ENCODE measurements at regions of chr10 and their contacts with region 1.

Region 1: DNA sequence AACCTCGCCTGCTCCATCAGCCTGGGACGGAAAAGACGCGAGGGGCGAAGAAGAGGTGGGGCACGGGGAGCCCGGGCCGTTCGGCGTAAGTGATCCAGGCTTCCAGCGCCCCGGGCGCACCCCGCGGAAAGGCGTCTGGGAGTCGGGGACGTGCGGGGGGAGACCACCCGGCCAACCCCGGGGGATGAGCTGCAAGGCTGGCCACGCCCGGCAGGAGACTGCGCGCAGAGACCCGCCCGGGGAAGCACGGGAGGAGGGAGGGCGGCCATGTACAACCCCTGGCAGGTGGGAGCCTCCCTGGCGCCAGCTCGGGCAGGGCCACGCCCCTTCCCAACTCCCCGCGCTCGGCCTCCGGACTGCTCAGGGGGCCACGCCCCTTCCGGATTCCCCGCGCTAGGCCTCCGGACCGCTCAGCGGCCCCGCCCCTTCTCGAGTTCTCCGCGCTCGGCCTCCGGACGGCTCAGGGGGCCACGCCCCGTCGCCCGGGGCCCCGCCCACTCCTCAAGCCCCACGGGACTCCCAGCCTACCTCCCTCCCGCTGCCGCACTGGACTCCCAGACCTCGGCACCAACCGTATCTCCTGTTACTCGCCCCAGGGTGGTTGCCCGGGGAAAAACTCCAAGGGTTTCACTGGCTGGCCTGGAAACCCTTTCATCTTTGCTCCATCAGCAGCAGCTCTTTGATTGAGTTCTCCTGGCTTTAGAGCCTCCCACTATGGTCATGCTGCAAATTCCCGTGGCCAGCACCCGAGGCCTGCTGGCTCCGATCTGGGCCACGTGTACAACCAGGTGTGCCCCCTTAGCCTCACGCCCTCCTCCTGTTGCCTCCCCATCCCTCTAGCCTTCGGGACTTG is 284.4 kb downstream of the ZEB1 start:
- DNase-seq: peak; percentile 64
- ATAC-seq: peak; percentile 97
- H3K4me3 Mint-ChIP-seq: peak overlapping the region; percentile 83
- H3K27ac Mint-ChIP-seq: no peak overlapping the region
- H3K4me1 Mint-ChIP-seq: peaks cover 12% of the 10 kb centered on the region
- H3K27me3 Mint-ChIP-seq: peaks cover 6% of the 10 kb centered on the region
- CTCF ChIP-seq: no peak

Region 2: DNA sequence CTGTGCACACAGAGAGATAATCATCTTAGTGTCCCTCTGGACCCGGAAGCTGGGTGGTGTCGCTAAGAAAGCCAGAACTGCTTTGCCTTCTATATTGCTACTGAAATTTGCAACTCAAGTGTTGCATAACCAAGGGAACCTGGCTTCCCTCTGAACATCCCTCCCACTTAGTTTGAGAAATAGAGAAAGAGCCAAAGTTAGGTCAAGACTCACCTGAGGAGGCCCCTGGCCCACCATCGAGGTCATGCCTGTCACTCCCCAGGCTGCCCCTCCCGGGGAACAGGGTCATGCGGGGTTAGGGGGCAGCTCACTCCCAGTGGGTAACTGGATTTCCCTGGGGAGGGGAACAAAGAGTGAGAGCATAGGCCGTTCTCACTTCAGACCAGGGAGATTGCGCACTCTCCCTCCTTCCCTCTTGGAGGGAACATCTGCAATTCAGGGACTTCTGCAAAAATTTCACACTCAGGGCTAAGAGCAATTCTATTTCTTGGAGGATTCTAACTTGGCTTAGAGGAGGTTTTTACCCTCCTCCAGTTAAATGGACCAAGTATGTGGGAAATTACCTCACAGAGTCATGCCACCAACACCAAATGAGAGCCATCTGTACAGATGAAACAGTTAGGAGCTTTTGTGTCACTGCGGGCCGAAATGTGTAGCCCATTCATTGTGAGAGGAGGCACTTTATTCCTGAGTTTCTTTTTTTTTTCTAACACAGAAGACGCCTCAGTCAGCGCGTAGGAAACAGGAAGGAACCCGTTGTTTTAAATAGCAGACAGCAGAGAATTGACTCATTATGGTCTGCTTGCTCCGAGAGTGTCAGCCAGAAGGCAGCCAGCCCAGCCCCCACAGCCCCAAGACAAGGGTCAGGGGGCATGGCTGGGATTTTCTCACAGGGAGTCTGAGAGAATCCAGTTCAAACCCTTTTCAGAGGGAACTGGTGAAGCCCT is 103.9 kb after region 1 on chr10:
- CTCF ChIA-PET with region 1: no interaction called
- POLR2A ChIA-PET with region 1: no interaction called
- intact Hi-C with region 1: loop called (anchors 5 kb)
- DNase-seq: no peak
- ATAC-seq: peak; percentile 91
- H3K4me3 Mint-ChIP-seq: peak overlapping the region; percentile 62
- H3K27ac Mint-ChIP-seq: peak overlapping the region; percentile 72
- H3K4me1 Mint-ChIP-seq: peaks cover 39% of the 10 kb centered on the region
- H3K27me3 Mint-ChIP-seq: no peaks in the 10 kb centered on the region
- CTCF ChIP-seq: no peak